Right ventricle myocardium superior (tissue), 1 donor: ENCODE measurements at regions of chr20 and their contacts with region 1.

Region 1: GRCh38 chr20:33994222-33994913 is 657 bp downstream of the RALY start:
- DNase-seq: peak; percentile 93
- ATAC-seq: peak; percentile 63

Region 2: DNA sequence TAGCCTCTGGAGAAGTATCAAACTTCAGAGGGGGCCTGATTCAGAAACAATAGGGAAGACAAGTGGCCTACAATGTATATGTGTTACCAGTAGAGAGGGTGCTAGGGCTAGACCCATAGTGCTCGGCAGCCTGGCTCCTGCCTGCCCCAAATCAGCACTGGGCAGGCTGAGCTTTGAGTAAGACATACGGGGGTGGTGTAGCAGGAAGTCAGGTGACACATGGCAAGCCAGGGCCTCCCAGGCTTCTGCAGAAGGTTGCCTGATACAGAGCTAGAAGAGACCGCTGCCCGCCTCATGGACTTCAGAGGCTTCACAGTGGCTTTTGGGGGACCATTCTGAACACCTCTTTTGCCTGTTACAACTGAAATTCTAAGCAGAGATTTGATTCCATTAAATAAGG is 42.8 kb after region 1 on chr20:
- intact Hi-C with region 1: loop called (anchors 5 kb)
- DNase-seq: no peak
- ATAC-seq: peak; percentile 18